GM10248 (cell line): ENCODE measurements at regions of chr9 and their contacts with region 1.

Region 1: GRCh38 chr9:128020692-128021091 is 39.9 kb upstream of the EEIG1 start:
- DNase-seq: peak; percentile 9
- CTCF ChIP-seq: no peak

Region 2: DNA sequence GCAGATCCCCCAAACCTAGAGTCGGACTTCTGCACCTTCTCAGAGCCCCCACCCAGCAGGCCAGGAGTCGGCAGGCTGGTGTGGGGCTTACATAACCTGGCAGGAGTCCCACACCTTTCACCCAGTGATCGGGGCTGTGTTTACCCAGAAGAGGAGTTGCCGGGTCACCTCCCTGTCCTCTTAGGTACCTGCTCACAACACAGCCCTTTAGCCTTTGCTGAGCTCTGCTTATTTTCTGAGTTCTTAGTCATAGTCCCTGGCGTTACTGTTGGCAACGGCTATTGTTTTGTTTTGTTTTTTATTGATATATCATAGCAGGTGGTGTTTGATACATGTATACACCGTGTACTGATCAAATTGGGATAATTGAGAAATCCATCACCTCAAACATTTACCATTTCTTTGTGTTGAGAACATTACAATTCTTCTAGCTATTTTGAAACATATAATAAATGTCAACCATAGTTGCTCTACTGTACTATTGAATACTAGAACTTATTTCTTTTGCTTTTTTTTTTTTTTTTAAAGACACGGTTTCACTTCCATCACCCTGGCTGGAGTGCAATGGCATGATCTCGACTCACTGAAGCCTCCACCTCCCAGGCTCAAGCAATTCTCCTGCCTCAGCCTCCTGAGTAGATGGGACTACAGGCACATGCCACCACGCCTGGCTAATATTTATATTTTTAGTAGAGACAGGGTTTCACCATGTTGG is 29.5 kb before region 1 on chr9:
- CTCF ChIA-PET with region 1: interaction called, 4 read pairs
- POLR2A ChIA-PET with region 1: interaction called, 10 read pairs
- DNase-seq: no peak
- CTCF ChIP-seq: no peak